ENCODE measurements at regions of chr12 and their contacts with region 1.

Region 1: DNA sequence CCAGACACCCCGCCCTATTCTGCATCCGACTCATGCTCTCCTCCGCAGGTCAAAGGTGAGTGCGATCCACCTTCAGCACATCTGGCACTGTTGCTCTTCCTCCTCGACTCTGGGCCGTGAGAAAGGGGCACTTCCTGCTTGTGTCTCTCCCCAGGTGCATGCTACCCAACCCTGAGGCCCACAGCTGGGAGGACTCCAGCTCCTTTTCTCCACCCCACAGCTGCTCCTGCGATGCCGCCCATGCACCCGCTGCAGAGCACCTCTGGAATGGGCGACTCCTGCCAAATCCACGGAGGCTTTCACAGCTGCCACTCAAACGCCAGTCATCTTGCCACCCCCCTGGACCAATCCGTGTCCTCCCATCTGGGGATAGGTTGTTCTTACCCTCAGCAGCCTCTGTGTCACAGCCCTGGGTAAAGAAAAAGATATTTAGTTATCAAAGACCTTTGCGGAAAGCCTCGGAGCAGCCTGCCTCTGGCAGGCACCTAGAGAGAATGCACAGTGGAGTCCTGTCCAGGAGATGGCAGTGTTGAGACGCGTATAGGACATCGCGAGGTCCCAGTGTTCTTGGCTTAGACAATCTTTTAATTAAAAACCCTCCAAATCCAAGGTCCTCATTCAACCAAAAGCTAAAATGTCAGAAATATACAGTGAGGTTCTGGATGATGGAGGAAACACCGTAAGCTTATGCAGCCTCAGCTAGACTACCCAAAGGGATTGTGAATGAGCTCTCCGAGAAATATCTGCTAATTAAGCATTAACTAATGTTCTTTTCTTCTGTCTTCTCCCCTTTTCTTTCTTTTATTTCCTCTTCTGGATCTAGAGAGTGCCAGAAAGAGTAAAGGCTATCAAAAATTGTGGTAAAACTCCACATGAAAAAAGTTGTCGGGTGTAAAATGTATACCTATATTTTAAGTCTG is 54.3 kb downstream of the MYRFL start:
- DNase-seq: peak in 4 of 5 donors; percentile 61 to 76 (median 68)
- ATAC-seq: peak; percentile 58 to 95 (median 94)
- H3K4me3 ChIP-seq: peak overlapping the region in 7 of 12 donors; percentile 19 to 37 (median 26)
- H3K27ac ChIP-seq: no peak overlapping the region
- H3K4me1 ChIP-seq: peaks cover 0 to 9% (median 0%) of the 10 kb centered on the region in 12 donors
- H3K27me3 ChIP-seq: no peaks in the 10 kb centered on the region
- CTCF ChIP-seq: peak; percentile 77 to 94 (median 88)
- POLR2A ChIP-seq: no peak

Region 2: GRCh38 chr12:69779928-69780327 is 99.4 kb before region 1 on chr12:
- intact Hi-C with region 1: no loop called
- DNase-seq: no peak
- ATAC-seq: no peak
- H3K4me3 ChIP-seq: no peak overlapping the region
- H3K27ac ChIP-seq: no peak overlapping the region
- H3K4me1 ChIP-seq: no peaks in the 10 kb centered on the region
- H3K27me3 ChIP-seq: no peaks in the 10 kb centered on the region
- CTCF ChIP-seq: no peak
- POLR2A ChIP-seq: no peak

Region 3: DNA sequence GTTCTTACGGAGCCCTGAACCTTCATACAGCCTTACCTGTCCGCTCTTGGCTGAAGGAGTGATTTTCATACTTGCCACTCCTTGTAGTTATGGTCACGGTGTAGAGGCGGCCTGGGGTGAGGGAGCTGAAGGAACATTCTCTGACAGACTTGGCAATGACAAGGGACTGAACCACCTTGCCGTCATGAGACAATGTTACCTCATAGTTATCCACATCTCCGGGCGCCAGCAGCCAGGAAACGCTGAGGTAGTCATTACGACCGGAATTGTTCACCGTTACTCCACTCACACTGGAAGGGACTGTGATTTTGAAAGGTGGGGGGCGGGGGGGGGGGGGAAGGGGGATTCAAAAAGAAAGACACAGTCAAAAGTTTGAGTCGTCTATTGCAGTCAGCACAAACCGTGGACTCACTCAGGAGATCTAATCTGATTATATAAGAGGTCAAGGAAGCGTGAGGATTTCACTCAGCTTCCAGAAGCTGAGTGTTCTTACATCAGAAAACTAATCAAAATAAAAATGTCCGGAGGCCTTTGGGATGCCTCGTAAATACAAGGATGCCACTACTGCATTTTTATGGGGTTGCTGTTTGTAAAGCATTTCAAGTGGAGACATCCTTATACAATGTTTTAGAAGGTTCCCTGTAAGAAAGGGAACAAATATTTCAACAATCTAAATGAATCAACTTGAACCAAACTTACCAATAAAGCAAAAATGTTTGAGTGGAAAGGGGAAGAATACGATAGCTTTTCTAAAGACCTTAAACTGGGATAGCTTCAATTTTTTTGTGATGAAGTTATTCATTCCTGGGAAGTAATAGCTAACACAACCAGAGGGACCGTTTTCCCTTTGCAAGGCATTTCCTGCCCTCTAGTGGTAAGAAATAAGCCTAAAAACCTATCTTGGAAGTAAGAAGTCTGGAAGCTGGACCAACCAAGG is 697.3 kb after region 1 on chr12:
- intact Hi-C with region 1: loop called in 9 of 10 experiments (anchors 1 to 5 kb)
- DNase-seq: peak in 1 of 5 donors; percentile 9
- ATAC-seq: peak in 3 of 4 donors; percentile 73 to 86 (median 82)
- H3K4me3 ChIP-seq: no peak overlapping the region
- H3K27ac ChIP-seq: peak overlapping the region in 2 of 12 donors; percentile 5 to 8
- H3K4me1 ChIP-seq: peaks cover 0 to 9% (median 0%) of the 10 kb centered on the region in 12 donors
- H3K27me3 ChIP-seq: no peaks in the 10 kb centered on the region
- CTCF ChIP-seq: peak; percentile 61 to 85 (median 82)
- POLR2A ChIP-seq: no peak

Region 4: GRCh38 chr12:70849265-70849960 is 970.1 kb after region 1 on chr12:
- intact Hi-C with region 1: loop called in 1 of 10 experiments (anchors 5 kb)
- DNase-seq: no peak
- ATAC-seq: peak in 1 of 4 donors; percentile 76
- H3K4me3 ChIP-seq: no peak overlapping the region
- H3K27ac ChIP-seq: no peak overlapping the region
- H3K4me1 ChIP-seq: peaks cover 0 to 6% (median 0%) of the 10 kb centered on the region in 12 donors
- H3K27me3 ChIP-seq: no peaks in the 10 kb centered on the region
- CTCF ChIP-seq: peak; percentile 6 to 59 (median 41)
- POLR2A ChIP-seq: no peak

Measured in heart left ventricle (tissue), 16 donors.